Adrenal gland (tissue), 19 donors: ENCODE measurements at regions of chr14 and their contacts with region 1.

Region 1: GRCh38 chr14:67763158-67763788 is 53.1 kb downstream of the ZFYVE26 start:
- DNase-seq: no peak
- H3K4me3 ChIP-seq: no peak overlapping the region
- H3K27ac ChIP-seq: no peak overlapping the region
- H3K4me1 ChIP-seq: no peaks in the 10 kb centered on the region
- H3K27me3 ChIP-seq: no peaks in the 10 kb centered on the region
- CTCF ChIP-seq: no peak
- POLR2A ChIP-seq: no peak

Region 2: DNA sequence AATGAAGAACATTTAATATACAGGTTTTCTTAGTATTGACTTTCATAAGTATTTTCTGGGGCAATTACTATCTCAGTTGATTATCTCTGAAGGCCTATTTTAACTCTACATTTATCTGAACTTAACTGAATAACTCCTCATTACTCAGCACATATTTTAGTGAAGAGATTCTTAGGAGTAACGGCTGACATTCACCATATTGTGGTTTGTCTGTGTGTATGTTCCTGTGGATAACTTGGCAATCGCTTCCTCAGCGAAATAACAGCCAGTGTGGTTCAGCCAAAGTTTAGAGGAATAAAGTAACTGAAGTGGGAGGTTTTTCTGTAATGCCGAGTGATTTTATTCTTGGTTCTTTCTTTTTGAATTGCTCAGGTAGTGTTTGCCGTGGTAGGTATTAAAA is 224.3 kb after region 1 on chr14:
- intact Hi-C with region 1: no loop called
- DNase-seq: no peak
- H3K4me3 ChIP-seq: no peak overlapping the region
- H3K27ac ChIP-seq: no peak overlapping the region
- H3K4me1 ChIP-seq: no peaks in the 10 kb centered on the region
- H3K27me3 ChIP-seq: no peaks in the 10 kb centered on the region
- CTCF ChIP-seq: no peak
- POLR2A ChIP-seq: no peak

Region 3: DNA sequence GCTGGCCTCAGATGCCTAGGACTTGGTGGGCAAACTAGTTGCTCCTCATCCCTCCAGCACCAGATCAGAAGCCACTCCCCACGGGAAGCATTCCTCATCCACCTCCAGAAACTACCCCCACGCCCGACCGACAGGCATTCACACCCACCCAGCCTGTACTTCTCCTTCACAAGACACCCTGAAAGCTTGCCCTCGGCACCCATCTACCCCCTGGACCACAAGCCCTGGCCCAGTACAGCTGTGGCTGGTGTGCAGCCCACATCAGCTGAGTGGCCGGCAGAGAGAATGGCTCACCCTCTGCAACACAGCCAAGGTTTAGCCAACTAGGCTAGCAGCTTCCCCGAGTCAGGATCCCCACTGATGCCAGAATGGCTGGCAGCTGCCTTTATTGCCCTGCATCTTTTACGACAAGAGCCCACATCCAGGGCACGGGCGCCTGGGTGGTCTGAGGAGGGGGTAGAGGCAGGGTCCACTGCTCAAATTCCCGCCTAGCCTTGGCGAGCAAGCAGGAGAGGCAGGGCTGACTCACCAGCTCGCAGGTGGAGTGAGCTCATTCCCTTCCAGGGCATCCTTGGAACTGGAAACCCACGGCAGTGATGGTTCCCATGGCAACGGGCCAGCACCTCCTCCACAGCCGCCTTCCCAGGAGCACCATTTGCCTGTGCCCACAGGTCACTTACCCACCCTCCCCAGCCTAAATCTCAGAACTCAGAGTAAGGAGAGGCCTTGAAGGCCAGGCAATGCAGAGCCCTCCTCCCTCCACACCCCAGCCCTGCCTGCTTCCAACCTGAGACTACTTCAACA is 1198.7 kb after region 1 on chr14:
- intact Hi-C with region 1: loop called in 1 of 2 experiments (anchors 5 kb)
- DNase-seq: peak; percentile 57 to 86 (median 69)
- H3K4me3 ChIP-seq: no peak overlapping the region
- H3K27ac ChIP-seq: peak overlapping the region in 2 of 5 donors; percentile 11 to 62
- H3K4me1 ChIP-seq: peaks cover 33 to 52% of the 10 kb centered on the region in 2 donors
- H3K27me3 ChIP-seq: no peaks in the 10 kb centered on the region
- CTCF ChIP-seq: no peak
- POLR2A ChIP-seq: no peak

Region 4: DNA sequence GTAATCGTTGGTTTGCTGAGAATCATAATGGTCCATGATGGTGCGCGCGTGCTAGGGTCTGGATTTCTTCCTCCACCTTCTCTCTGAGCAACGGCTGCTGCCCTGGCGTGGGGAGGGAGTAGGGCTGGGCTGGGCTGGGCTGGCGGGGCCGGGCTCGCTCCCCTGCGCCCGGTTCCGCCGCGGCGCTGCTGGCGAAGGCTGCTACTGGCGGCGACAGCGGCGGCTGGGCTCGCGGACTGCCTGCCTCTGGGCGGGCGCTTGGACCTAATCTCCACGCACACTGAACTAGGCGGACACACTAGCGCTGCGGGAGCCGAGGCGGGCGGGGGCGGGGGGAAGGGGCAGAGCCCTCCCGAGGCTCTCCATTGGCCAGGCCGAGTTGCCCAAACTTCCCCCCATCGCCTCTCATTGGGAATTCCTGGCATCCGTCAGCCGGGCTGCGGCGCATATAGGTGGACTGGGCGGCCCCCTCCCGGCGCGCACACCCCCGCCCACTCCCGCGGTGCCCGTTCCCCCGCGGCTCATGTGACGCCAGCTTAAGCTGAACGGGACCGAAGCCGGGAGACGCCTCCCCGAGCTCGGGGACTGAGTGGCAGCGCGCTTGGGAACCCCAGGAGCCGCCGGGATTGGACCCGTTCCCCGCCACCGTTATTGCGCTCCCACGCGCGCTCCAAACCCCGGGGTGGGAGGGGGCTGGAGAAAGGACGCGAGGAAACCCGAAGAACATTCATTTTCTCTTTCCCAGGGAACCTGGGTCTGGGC is 1215.9 kb after region 1 on chr14 and contains the start of gene ACTN1:
- intact Hi-C with region 1: no loop called
- DNase-seq: peak; percentile 96 to 98 (median 97)
- H3K4me3 ChIP-seq: peak within 1 kb of the TSS; percentile 67 to 89 (median 72)
- H3K27ac ChIP-seq: peak within 1 kb of the TSS; percentile 74 to 95 (median 92)
- H3K4me1 ChIP-seq: peaks cover 29 to 51% of the 10 kb centered on the region in 2 donors
- H3K27me3 ChIP-seq: no peaks in the 10 kb centered on the region
- CTCF ChIP-seq: peak in 1 of 6 experiments; percentile 6
- POLR2A ChIP-seq: peak; percentile 95 to 98
- total RNA-seq, gene ACTN1: 11.6 to 180 (median 95.3) TPM